ENCODE measurements at regions of chr10 and their contacts with region 1.

Region 1: DNA sequence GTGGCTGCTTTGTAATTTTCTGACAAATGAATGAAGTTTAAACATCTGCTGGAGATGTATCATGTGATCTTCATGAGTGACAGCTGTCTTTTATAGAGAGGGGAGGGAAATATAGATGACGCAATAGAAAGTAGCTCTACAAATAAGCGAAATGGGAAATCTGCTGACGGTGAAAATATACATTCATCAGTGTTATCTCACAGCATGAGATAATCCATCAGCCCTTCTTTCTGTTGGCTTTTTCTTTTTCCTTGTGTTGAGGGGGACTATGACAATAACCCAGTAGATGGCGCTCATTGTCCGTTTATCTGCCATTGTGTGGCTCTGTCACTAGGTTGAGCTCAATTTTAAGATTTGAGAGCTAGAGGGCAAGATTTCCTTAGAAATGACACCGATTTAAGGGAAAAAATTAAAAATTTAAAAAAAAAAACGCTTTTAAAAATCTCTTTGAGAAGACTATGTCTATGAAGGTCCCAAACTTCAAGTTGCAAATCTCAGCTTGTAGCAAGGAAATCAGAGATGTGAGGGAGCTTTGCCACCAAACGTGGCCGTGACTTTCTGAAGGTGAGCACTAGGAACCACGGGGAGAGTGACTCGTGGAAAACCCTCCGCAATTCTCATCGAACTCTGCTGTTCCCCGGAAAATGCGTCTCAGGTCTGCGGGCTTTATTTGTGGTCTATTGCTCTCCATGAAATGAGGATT is 114.6 kb upstream of the SFMBT2 start:
- DNase-seq: peak; percentile 85
- ATAC-seq: peak; percentile 93
- H3K4me3 Mint-ChIP-seq: no peak overlapping the region
- H3K27ac Mint-ChIP-seq: peak overlapping the region; percentile 0
- H3K4me1 Mint-ChIP-seq: peaks cover 47% of the 10 kb centered on the region
- H3K27me3 Mint-ChIP-seq: peaks cover 14% of the 10 kb centered on the region

Region 2: GRCh38 chr10:6936931-6937330 is 588.5 kb before region 1 on chr10:
- CTCF ChIA-PET with region 1: no interaction called
- POLR2A ChIA-PET with region 1: no interaction called
- DNase-seq: no peak
- ATAC-seq: no peak
- H3K4me3 Mint-ChIP-seq: no peak overlapping the region
- H3K27ac Mint-ChIP-seq: no peak overlapping the region
- H3K4me1 Mint-ChIP-seq: peaks cover 4% of the 10 kb centered on the region
- H3K27me3 Mint-ChIP-seq: peaks cover 21% of the 10 kb centered on the region

Region 3: GRCh38 chr10:7424315-7424714 is 101.2 kb before region 1 on chr10:
- CTCF ChIA-PET with region 1: interaction called, 31 read pairs
- POLR2A ChIA-PET with region 1: no interaction called
- DNase-seq: peak; percentile 72
- ATAC-seq: peak; percentile 87
- H3K4me3 Mint-ChIP-seq: no peak overlapping the region
- H3K27ac Mint-ChIP-seq: peak overlapping the region; percentile 25
- H3K4me1 Mint-ChIP-seq: peaks cover 34% of the 10 kb centered on the region
- H3K27me3 Mint-ChIP-seq: peaks cover 4% of the 10 kb centered on the region

Region 4: GRCh38 chr10:7515439-7515838 is 10.0 kb before region 1 on chr10:
- CTCF ChIA-PET with region 1: interaction called, 28 read pairs
- POLR2A ChIA-PET with region 1: no interaction called
- DNase-seq: no peak
- ATAC-seq: no peak
- H3K4me3 Mint-ChIP-seq: no peak overlapping the region
- H3K27ac Mint-ChIP-seq: no peak overlapping the region
- H3K4me1 Mint-ChIP-seq: peaks cover 62% of the 10 kb centered on the region
- H3K27me3 Mint-ChIP-seq: no peaks in the 10 kb centered on the region

Region 5: GRCh38 chr10:7622969-7623368 is 97.5 kb after region 1 on chr10:
- CTCF ChIA-PET with region 1: interaction called, 11 read pairs
- POLR2A ChIA-PET with region 1: no interaction called
- DNase-seq: no peak
- ATAC-seq: no peak
- H3K4me3 Mint-ChIP-seq: no peak overlapping the region
- H3K27ac Mint-ChIP-seq: no peak overlapping the region
- H3K4me1 Mint-ChIP-seq: peaks cover 4% of the 10 kb centered on the region
- H3K27me3 Mint-ChIP-seq: peaks cover 7% of the 10 kb centered on the region

Region 6: GRCh38 chr10:7756360-7756992 is 231.0 kb after region 1 on chr10:
- CTCF ChIA-PET with region 1: interaction called, 10 read pairs
- POLR2A ChIA-PET with region 1: no interaction called
- DNase-seq: peak; percentile 42
- ATAC-seq: peak; percentile 58
- H3K4me3 Mint-ChIP-seq: no peak overlapping the region
- H3K27ac Mint-ChIP-seq: no peak overlapping the region
- H3K4me1 Mint-ChIP-seq: no peaks in the 10 kb centered on the region
- H3K27me3 Mint-ChIP-seq: no peaks in the 10 kb centered on the region